ENCODE measurements at regions of chr4 and their contacts with region 1.

Region 1: DNA sequence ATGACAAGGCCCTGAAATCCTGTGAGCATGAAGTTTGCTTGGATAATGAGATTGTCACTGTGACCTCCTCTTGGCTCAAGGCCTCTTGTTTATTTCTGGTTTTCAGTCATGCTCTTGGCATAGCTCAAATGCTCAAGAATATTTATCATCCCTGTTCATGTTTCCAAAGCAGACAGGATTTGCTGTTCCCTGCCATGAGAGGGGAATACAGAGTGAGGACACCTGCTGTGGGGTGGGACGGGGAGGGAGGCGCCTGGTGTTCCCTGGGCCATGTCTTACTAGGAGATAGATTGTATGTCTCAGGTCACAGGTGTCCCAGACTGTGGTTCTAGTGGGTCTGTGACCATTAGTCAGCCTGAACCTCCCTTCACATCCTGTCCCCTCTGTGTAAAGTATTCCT is 34.9 kb upstream of the SH3RF1 start:
- DNase-seq: no peak
- H3K4me3 ChIP-seq: no peak overlapping the region
- CTCF ChIP-seq: no peak

Region 2: DNA sequence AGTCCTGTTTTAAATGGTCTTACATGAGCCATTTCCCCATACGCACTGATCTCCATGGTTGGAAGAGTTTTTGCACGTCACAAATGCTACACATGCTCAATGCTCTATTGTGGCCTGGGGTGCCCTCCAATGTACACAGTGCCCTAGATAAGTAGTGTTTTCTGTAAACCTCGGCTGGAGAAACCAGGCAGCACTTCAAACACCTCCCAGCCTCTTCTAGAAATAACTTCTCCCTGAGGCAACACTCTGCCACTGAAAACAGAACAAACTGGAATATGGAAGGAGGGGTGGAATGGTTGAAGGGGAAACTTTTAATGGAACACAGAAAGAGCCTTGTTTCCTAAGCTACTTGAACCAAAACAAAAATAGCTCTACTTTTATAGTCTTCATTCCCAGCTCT is 171.7 kb before region 1 on chr4:
- in situ Hi-C with region 1: no loop called
- DNase-seq: no peak
- H3K4me3 ChIP-seq: no peak overlapping the region
- CTCF ChIP-seq: no peak

Region 3: GRCh38 chr4:169215656-169216055 is 90.0 kb before region 1 on chr4:
- in situ Hi-C with region 1: loop called (anchors 5 kb)
- DNase-seq: no peak
- H3K4me3 ChIP-seq: no peak overlapping the region
- CTCF ChIP-seq: no peak

Region 4: DNA sequence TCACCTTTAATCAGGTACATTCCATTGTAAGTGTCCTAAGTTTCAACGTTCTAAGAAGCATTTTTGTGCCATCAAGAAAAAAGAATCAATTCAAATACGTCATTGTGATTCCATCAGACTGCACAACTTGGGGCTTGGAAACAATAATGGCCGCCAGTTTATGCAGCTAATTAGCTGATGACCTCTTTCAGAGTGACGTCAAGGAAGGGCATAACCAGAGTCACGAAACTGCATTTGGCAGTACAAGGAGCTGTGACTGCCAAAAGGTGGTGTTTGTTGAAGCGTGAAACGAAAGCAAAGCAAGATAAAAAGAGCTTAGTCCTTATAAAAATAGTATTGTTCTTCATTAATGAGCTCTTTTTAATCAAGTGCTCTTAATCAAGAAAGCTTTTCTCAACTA is 46.2 kb after region 1 on chr4:
- in situ Hi-C with region 1: loop called (anchors 5 kb)
- DNase-seq: peak; percentile 96
- H3K4me3 ChIP-seq: no peak overlapping the region
- CTCF ChIP-seq: no peak

Measured in astrocyte of the cerebellum (primary cell).